ENCODE measurements at regions of chr3 and their contacts with region 1.

Region 1: DNA sequence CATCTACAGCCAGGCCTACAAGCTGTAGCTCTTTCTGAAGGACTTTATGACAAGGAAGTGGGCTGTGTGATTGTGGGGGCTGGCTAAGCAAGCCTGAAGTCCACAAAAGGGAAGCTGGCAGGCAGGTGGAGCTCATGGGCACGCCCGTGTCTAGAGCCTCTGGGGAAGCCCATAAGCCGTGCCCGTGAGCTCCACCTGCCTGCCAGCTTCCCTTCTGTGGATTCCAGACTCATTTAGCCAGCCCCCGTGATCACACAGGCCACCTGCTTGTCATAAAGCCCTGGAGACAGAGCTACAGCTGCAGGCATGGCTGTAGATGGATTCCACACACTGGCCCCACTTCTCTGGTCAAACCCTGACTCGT is 15.2 kb downstream of the EFCC1 start:
- DNase-seq: peak; percentile 80
- ATAC-seq: peak; percentile 84
- H3K4me3 Mint-ChIP-seq: peak overlapping the region; percentile 63
- H3K27ac Mint-ChIP-seq: peak overlapping the region; percentile 96
- H3K4me1 Mint-ChIP-seq: peaks cover 36% of the 10 kb centered on the region
- H3K27me3 Mint-ChIP-seq: no peaks in the 10 kb centered on the region

Region 2: DNA sequence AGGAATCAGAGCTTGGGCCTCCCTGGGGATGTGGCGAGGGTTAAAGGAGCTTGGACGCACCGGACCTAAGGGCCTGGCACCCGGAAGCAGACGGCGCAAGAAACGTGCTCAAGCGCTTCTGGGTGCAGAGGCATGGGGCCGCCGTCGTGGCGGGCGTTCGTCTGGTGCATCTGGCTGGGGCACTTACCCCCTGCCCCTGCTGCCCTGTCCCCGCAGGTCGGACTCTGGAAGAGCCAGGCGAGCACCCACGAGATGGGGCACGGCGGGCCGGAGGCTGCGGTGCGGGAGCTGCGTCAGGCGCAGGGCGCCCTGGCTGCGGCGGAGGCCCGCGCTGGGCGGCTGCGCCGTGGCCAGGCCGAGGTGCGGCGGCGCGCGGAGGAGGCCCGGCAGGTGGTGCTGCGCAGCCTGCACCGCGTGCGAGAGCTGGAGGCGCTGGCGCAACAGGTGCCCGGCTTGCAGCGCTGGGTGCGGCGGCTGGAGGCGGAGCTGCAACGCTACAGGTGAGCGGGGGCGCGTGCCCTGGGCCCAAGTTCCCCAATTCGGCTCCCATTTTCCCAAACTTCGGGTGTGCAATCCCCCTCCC is 12.7 kb before region 1 on chr3:
- CTCF ChIA-PET with region 1: interaction called, 15 read pairs
- POLR2A ChIA-PET with region 1: interaction called, 4 read pairs
- intact Hi-C with region 1: no loop called
- DNase-seq: peak; percentile 77
- ATAC-seq: peak; percentile 74
- H3K4me3 Mint-ChIP-seq: peak overlapping the region; percentile 52
- H3K27ac Mint-ChIP-seq: no peak overlapping the region
- H3K4me1 Mint-ChIP-seq: peaks cover 36% of the 10 kb centered on the region
- H3K27me3 Mint-ChIP-seq: peaks cover 27% of the 10 kb centered on the region

Region 3: GRCh38 chr3:129026728-129027543 is 10.6 kb after region 1 on chr3:
- CTCF ChIA-PET with region 1: interaction called, 62 read pairs
- POLR2A ChIA-PET with region 1: interaction called, 19 read pairs
- intact Hi-C with region 1: no loop called
- DNase-seq: peak; percentile 96
- ATAC-seq: peak; percentile 100
- H3K4me3 Mint-ChIP-seq: peak overlapping the region; percentile 72
- H3K27ac Mint-ChIP-seq: peak overlapping the region; percentile 81
- H3K4me1 Mint-ChIP-seq: peaks cover 12% of the 10 kb centered on the region
- H3K27me3 Mint-ChIP-seq: no peaks in the 10 kb centered on the region

Measured in activated CD4-positive, alpha-beta T cell treated with anti-CD3 and anti-CD28 coated beads for 36 hours (primary cell).